Common myeloid progenitor, CD34-positive (primary cell): ENCODE measurements at regions of chr3 and their contacts with region 1.

Region 1: GRCh38 chr3:3170998-3171397 is 8.5 kb downstream of the CRBN start:
- DNase-seq: peak; percentile 65 to 76 (median 72)
- H3K4me3 ChIP-seq: no peak overlapping the region
- H3K27ac ChIP-seq: peak overlapping the region in 1 of 2 experiments; percentile 88
- H3K4me1 ChIP-seq: peaks cover 27 to 52% (median 44%) of the 10 kb centered on the region in 4 experiments
- H3K27me3 ChIP-seq: no peaks in the 10 kb centered on the region

Region 2: GRCh38 chr3:2354702-2355101 is 816.3 kb before region 1 on chr3:
- CTCF ChIA-PET with region 1: no interaction called
- POLR2A ChIA-PET with region 1: no interaction called
- DNase-seq: no peak
- H3K4me3 ChIP-seq: no peak overlapping the region
- H3K27ac ChIP-seq: no peak overlapping the region
- H3K4me1 ChIP-seq: no peaks in the 10 kb centered on the region
- H3K27me3 ChIP-seq: no peaks in the 10 kb centered on the region

Region 3: DNA sequence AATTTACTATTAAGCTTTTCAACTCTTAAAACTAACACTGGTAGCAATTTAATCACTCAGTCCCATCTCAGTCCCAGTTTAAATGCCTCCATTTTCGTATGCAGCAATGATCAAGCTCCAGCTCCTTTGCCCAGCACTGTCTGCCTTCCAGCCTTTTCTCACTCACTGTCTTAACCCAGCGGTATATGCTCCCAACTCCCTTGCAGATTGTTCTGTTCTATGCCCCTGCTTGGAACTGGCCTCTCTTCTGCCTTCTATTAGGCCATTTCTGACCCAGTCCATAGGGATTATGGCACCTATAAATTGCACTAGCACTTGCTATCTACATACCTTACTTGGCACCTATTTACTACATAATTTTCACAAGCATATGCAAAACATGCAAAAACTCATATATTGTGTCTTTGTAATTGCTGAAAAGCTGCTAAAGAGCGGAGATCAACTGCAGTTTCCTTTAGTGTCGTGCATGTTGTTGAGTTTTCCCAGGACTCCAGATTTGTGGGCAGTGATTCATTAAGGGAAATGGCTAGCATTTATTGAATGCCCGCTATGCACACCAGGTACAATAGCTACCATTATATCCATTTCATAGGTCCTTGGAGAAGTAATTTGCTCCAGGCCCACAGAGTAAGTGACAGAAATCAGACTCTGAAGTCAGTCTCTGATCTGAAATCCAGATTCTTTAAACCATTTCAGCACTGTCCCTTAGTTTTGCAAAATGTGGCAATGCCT is 16.0 kb before region 1 on chr3:
- CTCF ChIA-PET with region 1: interaction called, 33 read pairs
- POLR2A ChIA-PET with region 1: no interaction called
- DNase-seq: no peak
- H3K4me3 ChIP-seq: no peak overlapping the region
- H3K27ac ChIP-seq: no peak overlapping the region
- H3K4me1 ChIP-seq: peaks cover 0 to 2% (median 1%) of the 10 kb centered on the region in 4 experiments
- H3K27me3 ChIP-seq: no peaks in the 10 kb centered on the region

Region 4: DNA sequence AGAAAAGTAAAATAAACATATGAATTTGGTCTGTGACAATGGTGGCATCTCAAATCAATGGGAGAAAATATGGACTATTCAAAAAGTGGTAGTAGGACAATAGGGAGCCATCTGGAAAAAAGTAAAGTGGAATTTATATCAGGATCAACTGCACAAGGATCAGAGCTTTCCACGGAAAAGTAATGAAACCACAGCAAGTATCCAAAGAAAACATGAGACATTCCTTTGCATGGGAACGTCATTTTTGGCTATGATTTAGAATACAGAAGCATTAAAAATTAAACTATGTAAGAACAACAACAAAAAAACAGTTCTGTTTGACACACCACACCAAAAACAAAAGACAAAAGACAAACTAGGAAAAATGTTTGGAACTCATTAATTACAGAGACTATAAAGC is 10.2 kb before region 1 on chr3:
- CTCF ChIA-PET with region 1: interaction called, 33 read pairs
- POLR2A ChIA-PET with region 1: no interaction called
- DNase-seq: no peak
- H3K4me3 ChIP-seq: no peak overlapping the region
- H3K27ac ChIP-seq: peak overlapping the region in 1 of 2 experiments; percentile 16
- H3K4me1 ChIP-seq: peaks cover 0 to 2% (median 1%) of the 10 kb centered on the region in 4 experiments
- H3K27me3 ChIP-seq: no peaks in the 10 kb centered on the region

Region 5: GRCh38 chr3:3191675-3192285 is 20.8 kb after region 1 on chr3:
- CTCF ChIA-PET with region 1: interaction called, 20 read pairs
- POLR2A ChIA-PET with region 1: interaction called, 5 read pairs
- DNase-seq: peak; percentile 87 to 95 (median 89)
- H3K4me3 ChIP-seq: peak overlapping the region in 2 of 7 experiments; percentile 4 to 37
- H3K27ac ChIP-seq: peak overlapping the region; percentile 66 to 84
- H3K4me1 ChIP-seq: peaks cover 30 to 79% (median 61%) of the 10 kb centered on the region in 4 experiments
- H3K27me3 ChIP-seq: no peaks in the 10 kb centered on the region